HEK293T (cell line): ENCODE measurements at regions of chr14 and their contacts with region 1.

Region 1: DNA sequence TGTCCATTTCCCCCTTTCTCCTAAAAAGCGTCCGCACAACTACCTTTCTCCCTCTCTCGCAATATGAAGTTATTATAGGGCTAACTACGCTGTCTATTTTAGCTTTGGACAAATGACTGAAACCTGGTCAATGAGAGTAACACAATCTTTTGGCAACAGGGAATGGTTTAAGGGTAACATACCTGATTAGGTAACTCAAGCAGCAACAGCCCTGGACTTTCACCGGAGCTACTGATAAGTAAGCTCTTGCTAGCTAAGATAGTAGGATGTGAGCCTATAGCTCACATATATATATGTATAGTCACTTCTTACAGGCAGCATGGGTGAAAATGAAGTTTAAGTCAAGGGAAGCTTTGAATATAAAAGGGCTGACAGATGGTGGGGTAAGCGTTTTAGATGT is 313.0 kb downstream of the CEP128 start:
- DNase-seq: no peak

Region 2: GRCh38 chr14:80414080-80414479 is 214.5 kb before region 1 on chr14:
- CTCF ChIA-PET with region 1: no interaction called
- POLR2A ChIA-PET with region 1: no interaction called
- DNase-seq: no peak

Region 3: GRCh38 chr14:80718940-80719339 is 90.4 kb after region 1 on chr14:
- CTCF ChIA-PET with region 1: interaction called, 10 read pairs
- POLR2A ChIA-PET with region 1: no interaction called
- DNase-seq: no peak